ENCODE measurements at regions of chr1 and their contacts with region 1.

Region 1: GRCh38 chr1:24391882-24392603 is 21.5 kb downstream of the STPG1 start:
- DNase-seq: peak; percentile 80
- H3K4me3 Mint-ChIP-seq: peak overlapping the region; percentile 60
- H3K27ac Mint-ChIP-seq: peak overlapping the region; percentile 86
- H3K4me1 Mint-ChIP-seq: peaks cover 47% of the 10 kb centered on the region
- H3K27me3 Mint-ChIP-seq: no peaks in the 10 kb centered on the region

Region 2: DNA sequence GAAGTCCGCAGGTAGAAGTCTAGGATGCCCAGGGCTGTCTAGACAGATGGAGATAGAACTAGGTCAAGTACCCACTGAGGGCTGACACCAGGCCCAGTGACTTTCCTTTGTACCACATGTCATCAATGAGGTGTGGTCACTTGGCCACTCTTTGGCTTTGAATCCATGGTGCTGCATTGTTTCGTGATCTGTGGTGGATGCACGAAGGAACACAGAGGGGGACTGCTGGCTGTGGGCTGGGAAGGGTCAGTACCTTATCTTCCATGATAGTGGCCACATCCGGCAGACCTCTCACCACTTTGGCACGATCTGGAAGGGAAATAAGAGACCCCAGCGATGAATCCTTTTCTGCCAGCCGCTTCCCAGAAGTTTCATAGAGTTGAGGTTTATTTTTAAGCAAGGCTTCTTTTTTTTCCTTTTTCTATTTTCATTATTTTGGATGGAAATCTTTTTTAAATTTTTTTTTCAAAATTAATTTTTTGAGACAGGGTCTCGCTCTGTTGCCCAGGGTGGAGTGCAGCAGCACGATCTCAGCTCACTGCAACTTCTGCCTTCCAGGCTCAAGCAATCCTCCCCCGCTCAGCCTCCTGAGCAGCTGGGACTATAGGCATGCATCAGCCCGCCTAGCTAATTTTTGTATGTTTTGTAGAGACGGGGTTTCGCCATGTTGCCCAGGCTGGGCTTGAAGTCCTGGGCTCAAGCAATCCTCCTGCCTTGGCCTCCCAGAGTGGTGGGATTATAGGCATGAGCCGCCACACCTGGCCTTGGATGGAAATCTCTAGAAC is 333.2 kb before region 1 on chr1:
- CTCF ChIA-PET with region 1: no interaction called
- intact Hi-C with region 1: no loop called
- DNase-seq: no peak
- H3K4me3 Mint-ChIP-seq: no peak overlapping the region
- H3K27ac Mint-ChIP-seq: no peak overlapping the region
- H3K4me1 Mint-ChIP-seq: no peaks in the 10 kb centered on the region
- H3K27me3 Mint-ChIP-seq: no peaks in the 10 kb centered on the region

Region 3: DNA sequence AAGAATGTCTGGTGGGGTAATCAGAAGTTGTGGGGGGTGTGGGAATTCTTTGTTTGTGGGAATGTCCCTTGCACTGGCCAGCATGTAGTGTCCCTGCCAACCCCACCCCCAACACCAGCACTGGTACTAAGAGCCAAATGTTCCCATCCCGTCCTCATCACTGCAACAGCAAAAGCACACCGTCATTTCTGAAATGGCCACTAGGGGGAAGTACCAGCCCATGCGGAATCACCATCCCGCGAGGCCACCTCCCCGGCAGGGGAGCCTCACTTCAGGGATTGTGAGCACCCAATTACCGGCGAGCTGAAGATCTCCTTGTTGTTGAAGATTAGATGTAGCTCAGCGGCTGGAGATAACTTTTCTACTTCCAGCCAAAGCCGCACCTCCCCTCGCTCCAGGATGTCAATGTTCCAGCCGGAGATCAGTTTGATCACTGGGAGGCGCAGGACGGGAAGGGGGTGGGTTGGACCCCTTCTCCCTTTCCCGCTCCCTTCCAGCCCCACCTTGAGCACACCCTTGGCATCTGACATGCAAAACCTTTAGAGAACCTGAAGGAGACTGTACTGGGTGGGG is 321.1 kb before region 1 on chr1:
- CTCF ChIA-PET with region 1: no interaction called
- intact Hi-C with region 1: loop called (anchors 1 kb)
- DNase-seq: peak; percentile 87
- H3K4me3 Mint-ChIP-seq: no peak overlapping the region
- H3K27ac Mint-ChIP-seq: no peak overlapping the region
- H3K4me1 Mint-ChIP-seq: no peaks in the 10 kb centered on the region
- H3K27me3 Mint-ChIP-seq: no peaks in the 10 kb centered on the region

Region 4: GRCh38 chr1:24175033-24175755 is 216.8 kb before region 1 on chr1:
- CTCF ChIA-PET with region 1: no interaction called
- intact Hi-C with region 1: no loop called
- DNase-seq: no peak
- H3K4me3 Mint-ChIP-seq: no peak overlapping the region
- H3K27ac Mint-ChIP-seq: no peak overlapping the region
- H3K4me1 Mint-ChIP-seq: no peaks in the 10 kb centered on the region
- H3K27me3 Mint-ChIP-seq: no peaks in the 10 kb centered on the region

Region 5: GRCh38 chr1:24186993-24187805 is 204.8 kb before region 1 on chr1 and contains the start of gene IFNLR1:
- CTCF ChIA-PET with region 1: interaction called, 34 read pairs
- intact Hi-C with region 1: no loop called
- DNase-seq: peak; percentile 92
- H3K4me3 Mint-ChIP-seq: peak within 1 kb of the TSS; percentile 79
- H3K27ac Mint-ChIP-seq: peak within 1 kb of the TSS; percentile 18
- H3K4me1 Mint-ChIP-seq: peaks cover 50% of the 10 kb centered on the region
- H3K27me3 Mint-ChIP-seq: peaks cover 3% of the 10 kb centered on the region
- total RNA-seq, gene IFNLR1: 4.3 to 4.6 TPM

Region 6: GRCh38 chr1:24216276-24217074 is 175.6 kb before region 1 on chr1:
- CTCF ChIA-PET with region 1: no interaction called
- intact Hi-C with region 1: no loop called
- DNase-seq: no peak
- H3K4me3 Mint-ChIP-seq: no peak overlapping the region
- H3K27ac Mint-ChIP-seq: no peak overlapping the region
- H3K4me1 Mint-ChIP-seq: no peaks in the 10 kb centered on the region
- H3K27me3 Mint-ChIP-seq: peaks cover 20% of the 10 kb centered on the region

Region 7: GRCh38 chr1:24321697-24322469 is 70.2 kb before region 1 on chr1:
- CTCF ChIA-PET with region 1: interaction called, 19 read pairs
- intact Hi-C with region 1: loop called (anchors 1 kb)
- DNase-seq: peak; percentile 88
- H3K4me3 Mint-ChIP-seq: peak overlapping the region; percentile 67
- H3K27ac Mint-ChIP-seq: no peak overlapping the region
- H3K4me1 Mint-ChIP-seq: peaks cover 41% of the 10 kb centered on the region
- H3K27me3 Mint-ChIP-seq: peaks cover 73% of the 10 kb centered on the region

Region 8: GRCh38 chr1:24586970-24587820 is 195.2 kb after region 1 on chr1:
- CTCF ChIA-PET with region 1: interaction called, 48 read pairs
- intact Hi-C with region 1: loop called (anchors 1 kb)
- DNase-seq: peak; percentile 71
- H3K4me3 Mint-ChIP-seq: peak overlapping the region; percentile 24
- H3K27ac Mint-ChIP-seq: peak overlapping the region; percentile 72
- H3K4me1 Mint-ChIP-seq: peaks cover 5% of the 10 kb centered on the region
- H3K27me3 Mint-ChIP-seq: no peaks in the 10 kb centered on the region

Region 9: DNA sequence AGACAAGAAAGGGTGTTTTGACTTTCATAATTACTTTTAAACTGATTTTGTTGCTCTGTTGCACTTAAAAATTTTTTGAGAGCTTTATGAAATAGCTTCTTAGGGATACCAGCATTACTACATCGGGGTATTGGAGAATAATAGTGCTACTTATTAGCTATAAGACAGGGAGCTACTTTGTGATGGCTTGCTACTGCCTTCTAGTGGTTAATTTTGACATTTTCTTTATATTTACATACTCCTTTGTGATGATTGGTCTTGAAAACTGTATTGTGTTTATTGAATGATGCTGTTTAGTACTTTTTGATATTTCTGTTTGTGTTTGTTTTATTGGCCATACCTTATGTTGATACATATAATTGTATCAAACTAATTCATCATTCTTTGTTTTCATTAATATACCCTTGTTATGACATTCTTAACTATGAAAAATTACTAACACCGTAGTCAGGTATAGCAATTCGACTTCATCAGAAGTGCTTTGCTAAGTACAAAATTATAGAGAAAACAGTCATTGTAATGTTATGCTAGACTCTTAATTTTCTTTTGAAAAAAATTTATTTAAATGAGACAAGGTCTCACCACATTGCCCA is 438.7 kb after region 1 on chr1:
- CTCF ChIA-PET with region 1: no interaction called
- intact Hi-C with region 1: loop called (anchors 10 kb)
- DNase-seq: no peak
- H3K4me3 Mint-ChIP-seq: no peak overlapping the region
- H3K27ac Mint-ChIP-seq: no peak overlapping the region
- H3K4me1 Mint-ChIP-seq: no peaks in the 10 kb centered on the region
- H3K27me3 Mint-ChIP-seq: no peaks in the 10 kb centered on the region

Measured in activated naive CD4-positive, alpha-beta T cell treated with anti-CD3 and anti-CD28 coated beads for 36 hours (primary cell).